SK-N-SH (cell line): ENCODE measurements at regions of chr7 and their contacts with region 1.

Region 1: DNA sequence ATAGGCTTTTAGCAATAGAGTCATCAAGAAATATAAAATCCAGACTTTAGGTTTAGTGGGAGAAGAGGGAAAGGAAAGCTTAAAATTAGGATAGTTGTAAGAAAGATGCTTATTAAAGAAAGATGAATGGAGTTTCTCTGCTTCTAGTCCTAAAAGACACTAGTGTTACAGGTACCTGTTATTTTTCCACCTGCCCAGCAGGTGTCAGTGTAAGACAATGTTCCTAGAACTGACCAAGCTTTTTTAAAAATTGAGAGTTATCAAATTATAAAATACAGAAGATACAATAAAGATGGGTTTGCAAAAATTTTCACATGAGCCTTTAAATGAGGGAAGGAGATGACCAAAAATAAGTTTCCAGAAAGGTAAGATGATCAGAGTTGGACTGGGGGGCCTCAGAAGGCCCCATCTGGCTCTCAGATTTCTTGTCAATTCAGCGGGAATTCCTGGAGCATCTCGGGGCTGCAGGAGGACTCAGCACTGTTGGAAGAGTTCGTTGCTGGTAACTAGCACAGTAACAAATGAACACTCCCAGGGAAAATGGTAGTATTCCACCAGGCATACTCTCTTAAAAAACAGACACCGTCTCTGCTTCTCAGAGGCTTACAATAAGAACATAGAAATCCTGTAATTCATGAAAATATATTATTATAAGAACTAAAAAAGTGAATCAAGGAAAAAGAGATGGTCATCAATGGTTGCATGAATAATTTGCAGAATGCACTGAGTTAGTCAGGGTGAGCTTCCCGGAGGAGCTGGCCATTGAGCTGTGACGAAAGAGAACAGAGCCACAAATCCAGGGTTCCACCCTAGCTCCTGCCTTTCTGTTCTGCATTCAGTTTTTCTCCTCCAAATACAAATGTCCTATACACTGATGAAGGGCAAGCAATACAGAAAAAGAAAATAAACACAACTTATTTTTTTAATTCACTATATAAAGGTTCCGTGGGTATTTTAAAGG is 71.8 kb upstream of the PIK3CG start:
- DNase-seq: peak; percentile 50
- H3K4me3 ChIP-seq: no peak overlapping the region
- H3K27ac ChIP-seq: no peak overlapping the region
- H3K4me1 ChIP-seq: peaks cover 0 to 3% of the 10 kb centered on the region in 2 experiments; a peak in 1 of 4 replicates
- H3K27me3 ChIP-seq: no peaks in the 10 kb centered on the region
- CTCF ChIP-seq: peak; percentile 87
- EP300 ChIP-seq: no peak
- RAD21 ChIP-seq: peak; percentile 94

Region 2: DNA sequence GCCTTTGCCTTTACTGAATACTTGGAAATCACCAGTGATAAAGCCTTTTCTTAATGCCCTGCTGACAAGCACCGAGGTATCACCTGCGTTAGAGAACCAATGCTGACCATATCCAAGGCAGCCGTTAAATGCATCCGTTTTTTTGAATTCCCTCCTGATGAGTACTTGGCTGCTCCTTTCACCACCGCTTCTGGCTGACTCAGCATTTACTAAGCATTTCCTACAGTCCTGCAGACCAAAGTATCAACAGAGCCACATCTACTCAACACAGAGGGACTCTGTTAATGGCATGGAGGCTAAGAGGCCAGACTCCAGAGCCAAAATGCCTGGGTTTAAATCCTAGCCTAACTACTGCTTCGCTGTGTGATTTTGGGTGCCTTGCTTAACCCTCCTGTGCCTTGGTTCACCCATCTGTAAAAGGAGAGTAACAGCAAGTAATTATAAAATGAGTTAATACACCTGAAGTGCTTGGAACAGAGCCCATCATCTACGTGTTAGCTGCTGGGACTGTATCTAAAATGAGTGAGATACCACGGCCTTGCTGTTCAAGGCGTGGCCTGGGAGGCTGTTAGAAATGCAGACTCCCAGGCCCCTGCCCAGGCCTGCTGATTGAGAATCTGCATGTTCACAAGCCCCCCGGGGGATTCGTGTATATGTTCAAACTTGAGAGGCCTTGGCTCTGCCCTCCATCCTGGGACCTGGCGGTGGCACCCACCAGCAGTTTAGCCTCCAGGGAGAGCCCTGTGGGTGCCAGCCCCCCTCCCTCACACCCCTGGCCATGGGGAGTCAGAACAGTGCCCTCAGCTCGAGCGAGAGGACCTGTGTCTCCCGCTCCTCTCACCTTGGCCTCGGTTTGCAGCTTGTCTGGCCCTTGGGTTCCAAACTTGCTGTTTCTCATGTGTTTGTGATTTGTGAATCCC is 1181.2 kb before region 1 on chr7:
- CTCF ChIA-PET with region 1: no interaction called
- POLR2A ChIA-PET with region 1: no interaction called
- DNase-seq: no peak
- H3K4me3 ChIP-seq: no peak overlapping the region
- H3K27ac ChIP-seq: no peak overlapping the region
- H3K4me1 ChIP-seq: peaks cover 0 to 5% of the 10 kb centered on the region in 2 experiments; a peak in 1 of 4 replicates
- H3K27me3 ChIP-seq: no peaks in the 10 kb centered on the region
- CTCF ChIP-seq: no peak
- EP300 ChIP-seq: no peak
- RAD21 ChIP-seq: no peak

Region 3: GRCh38 chr7:106273009-106273668 is 520.2 kb before region 1 on chr7:
- CTCF ChIA-PET with region 1: no interaction called
- POLR2A ChIA-PET with region 1: no interaction called
- DNase-seq: no peak
- H3K4me3 ChIP-seq: no peak overlapping the region
- H3K27ac ChIP-seq: no peak overlapping the region
- H3K4me1 ChIP-seq: no peaks in the 10 kb centered on the region; a peak in 1 of 4 replicates
- H3K27me3 ChIP-seq: no peaks in the 10 kb centered on the region
- CTCF ChIP-seq: no peak
- EP300 ChIP-seq: no peak
- RAD21 ChIP-seq: no peak

Region 4: GRCh38 chr7:106779877-106780276 is 13.4 kb before region 1 on chr7:
- CTCF ChIA-PET with region 1: interaction called, 20 read pairs
- POLR2A ChIA-PET with region 1: no interaction called
- DNase-seq: no peak
- H3K4me3 ChIP-seq: no peak overlapping the region
- H3K27ac ChIP-seq: no peak overlapping the region
- H3K4me1 ChIP-seq: peaks cover 0 to 26% of the 10 kb centered on the region in 2 experiments; a peak in 1 of 4 replicates
- H3K27me3 ChIP-seq: no peaks in the 10 kb centered on the region
- CTCF ChIP-seq: peak; percentile 36
- EP300 ChIP-seq: no peak
- RAD21 ChIP-seq: peak; percentile 26; the same call in 1 of the 2 replicates

Region 5: DNA sequence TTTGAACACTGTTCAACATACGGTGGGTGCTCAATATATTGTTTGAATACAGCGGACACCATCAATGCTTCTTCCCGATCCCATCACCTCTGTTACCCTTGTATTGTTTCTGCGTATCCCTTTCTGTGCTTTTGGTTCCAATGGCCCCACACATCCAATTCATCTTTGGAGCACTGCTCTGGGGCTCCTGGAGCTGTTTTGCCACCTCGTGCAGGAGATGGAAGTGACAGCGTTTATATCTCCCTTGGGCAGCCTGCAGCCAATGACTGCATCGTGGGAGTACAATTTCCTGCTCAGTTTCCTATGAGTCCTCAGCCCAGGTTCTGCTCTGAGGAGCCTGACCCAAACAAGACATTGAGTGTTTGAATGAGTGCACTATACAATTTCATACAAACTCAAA is 21.6 kb after region 1 on chr7:
- CTCF ChIA-PET with region 1: interaction called, 17 read pairs
- POLR2A ChIA-PET with region 1: no interaction called
- DNase-seq: no peak
- H3K4me3 ChIP-seq: no peak overlapping the region
- H3K27ac ChIP-seq: no peak overlapping the region
- H3K4me1 ChIP-seq: no peaks in the 10 kb centered on the region
- H3K27me3 ChIP-seq: no peaks in the 10 kb centered on the region
- CTCF ChIP-seq: no peak
- EP300 ChIP-seq: no peak
- RAD21 ChIP-seq: no peak

Region 6: GRCh38 chr7:106947244-106947728 is 154.0 kb after region 1 on chr7:
- CTCF ChIA-PET with region 1: interaction called, 29 read pairs
- POLR2A ChIA-PET with region 1: no interaction called
- DNase-seq: peak; percentile 72
- H3K4me3 ChIP-seq: no peak overlapping the region
- H3K27ac ChIP-seq: no peak overlapping the region
- H3K4me1 ChIP-seq: peaks cover 0 to under 1% of the 10 kb centered on the region in 2 experiments; a peak in 1 of 4 replicates
- H3K27me3 ChIP-seq: no peaks in the 10 kb centered on the region
- CTCF ChIP-seq: peak; percentile 98
- EP300 ChIP-seq: no peak
- RAD21 ChIP-seq: peak; percentile 96

Region 7: DNA sequence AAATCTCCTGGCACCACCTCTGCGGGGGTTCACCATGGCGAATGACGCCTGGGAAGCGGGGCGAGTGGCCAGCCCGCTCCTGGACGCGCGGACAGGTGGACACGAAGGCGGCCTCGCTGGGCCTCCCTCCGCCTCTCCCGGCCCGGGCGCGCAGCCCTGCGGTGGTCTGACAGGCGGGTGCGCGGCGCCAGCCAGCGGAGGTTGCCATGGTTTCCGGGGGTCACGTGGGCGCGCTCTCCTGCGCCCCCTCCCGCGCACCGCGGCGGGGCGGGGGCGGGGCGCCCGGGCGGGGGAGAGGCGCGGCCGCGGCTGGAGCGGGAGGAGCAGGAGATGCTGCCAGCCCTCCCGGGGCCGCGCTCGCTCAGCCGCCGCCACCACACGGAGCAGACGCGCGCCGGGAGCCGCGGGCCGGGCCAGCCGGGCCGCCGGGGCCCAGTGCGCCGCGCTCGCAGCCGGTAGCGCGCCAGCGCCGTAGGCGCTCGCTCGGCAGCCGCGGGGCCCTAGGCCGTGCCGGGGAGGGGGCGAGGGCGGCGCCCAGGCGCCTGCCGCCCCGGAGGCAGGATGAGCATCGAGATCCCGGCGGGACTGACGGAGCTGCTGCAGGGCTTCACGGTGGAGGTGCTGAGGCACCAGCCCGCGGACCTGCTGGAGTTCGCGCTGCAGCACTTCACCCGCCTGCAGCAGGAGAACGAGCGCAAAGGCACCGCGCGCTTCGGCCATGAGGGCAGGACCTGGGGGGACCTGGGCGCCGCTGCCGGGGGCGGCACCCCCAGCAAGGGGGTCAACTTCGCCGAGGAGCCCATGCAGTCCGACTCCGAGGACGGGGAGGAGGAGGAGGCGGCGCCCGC is 251.3 kb after region 1 on chr7 and contains the start of gene PRKAR2B:
- CTCF ChIA-PET with region 1: interaction called, 10 read pairs
- POLR2A ChIA-PET with region 1: no interaction called
- DNase-seq: peak; percentile 100
- H3K4me3 ChIP-seq: peak within 1 kb of the TSS; percentile 98 to 100
- H3K27ac ChIP-seq: peak within 1 kb of the TSS; percentile 51 to 93
- H3K4me1 ChIP-seq: peaks cover 12 to 28% of the 10 kb centered on the region in 2 experiments; a peak in 3 of 4 replicates
- H3K27me3 ChIP-seq: no peaks in the 10 kb centered on the region
- CTCF ChIP-seq: no peak
- EP300 ChIP-seq: 0 out of 4 replicates have a peak, but pooled peaks of 1 of the 2 experiments have one; percentile 28
- RAD21 ChIP-seq: peak; percentile 38
- polyA plus RNA-seq, gene PRKAR2B: 17.3 and 19.3 TPM in 2 replicates

Region 8: GRCh38 chr7:107168233-107169119 is 375.2 kb after region 1 on chr7 and contains the start of gene HBP1:
- CTCF ChIA-PET with region 1: interaction called, 14 read pairs
- POLR2A ChIA-PET with region 1: no interaction called
- DNase-seq: peak; percentile 95
- H3K4me3 ChIP-seq: peak within 1 kb of the TSS; percentile 87 to 89
- H3K27ac ChIP-seq: peak within 1 kb of the TSS; percentile 97 to 98
- H3K4me1 ChIP-seq: peaks cover 0 to 13% of the 10 kb centered on the region in 2 experiments; a peak in 2 of 4 replicates
- H3K27me3 ChIP-seq: no peaks in the 10 kb centered on the region
- CTCF ChIP-seq: no peak
- EP300 ChIP-seq: no peak
- RAD21 ChIP-seq: no peak
- polyA plus RNA-seq, gene HBP1: 27.2 and 36.8 TPM in 2 replicates

Region 9: GRCh38 chr7:107187774-107188173 is 394.5 kb after region 1 on chr7:
- CTCF ChIA-PET with region 1: interaction called, 11 read pairs
- POLR2A ChIA-PET with region 1: no interaction called
- DNase-seq: no peak
- H3K4me3 ChIP-seq: no peak overlapping the region
- H3K27ac ChIP-seq: no peak overlapping the region
- H3K4me1 ChIP-seq: no peaks in the 10 kb centered on the region; a peak in 1 of 4 replicates
- H3K27me3 ChIP-seq: no peaks in the 10 kb centered on the region
- CTCF ChIP-seq: no peak
- EP300 ChIP-seq: no peak
- RAD21 ChIP-seq: no peak